Natural killer cell (primary cell): ENCODE measurements at regions of chr6 and their contacts with region 1.

Region 1: DNA sequence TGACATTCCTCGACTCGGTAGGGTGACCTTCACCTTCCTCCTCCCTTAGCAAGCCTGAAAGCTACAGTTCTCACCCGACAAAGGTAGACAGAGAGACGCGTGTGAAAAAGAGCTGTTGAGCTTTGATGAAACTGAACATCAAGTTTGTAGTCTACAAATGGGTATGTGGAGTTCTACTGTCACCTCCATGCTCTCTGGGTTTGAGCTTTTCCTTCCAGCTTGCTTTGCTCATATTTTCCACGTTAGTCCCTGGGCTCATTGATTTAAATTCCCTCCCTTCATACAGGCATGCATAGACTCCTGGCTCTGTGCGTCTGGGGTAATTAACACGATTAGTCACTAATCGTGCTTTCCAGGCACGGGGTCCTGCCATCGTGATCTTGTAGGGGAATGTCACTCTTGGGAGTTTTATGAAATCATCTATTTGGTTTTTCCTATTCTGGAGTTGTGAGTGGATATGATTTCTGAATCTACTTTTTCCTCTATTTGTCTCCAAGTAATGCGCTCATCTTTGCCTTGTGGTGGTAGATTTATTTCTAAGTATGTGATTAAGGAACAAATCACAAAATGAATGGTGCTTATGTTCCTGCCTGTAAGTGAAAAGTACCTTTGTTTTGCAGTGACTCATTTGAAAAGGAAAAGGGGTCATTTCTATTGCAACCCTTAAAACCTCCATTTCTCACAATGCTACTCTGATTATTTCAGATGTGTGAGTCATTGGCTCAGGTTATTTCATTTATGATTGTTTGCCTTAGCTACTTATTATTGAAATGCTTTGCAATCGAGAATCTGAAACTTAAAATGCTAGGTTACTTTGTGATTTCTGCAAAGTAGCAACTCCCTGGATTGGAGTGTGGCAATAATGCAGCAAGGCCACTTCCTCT is 154.6 kb downstream of the ZDHHC14 start:
- DNase-seq: peak in 1 of 2 donors; percentile 60
- ATAC-seq: peak in 1 of 3 donors; percentile 74
- H3K4me3 ChIP-seq: no peak overlapping the region
- H3K4me3 Mint-ChIP-seq: peak overlapping the region; percentile 75
- H3K27ac ChIP-seq: peak overlapping the region; percentile 72
- H3K27ac Mint-ChIP-seq: peak overlapping the region; percentile 91 to 92
- H3K4me1 ChIP-seq: peaks cover 58% of the 10 kb centered on the region
- H3K4me1 Mint-ChIP-seq: peaks cover 64 to 65% of the 10 kb centered on the region in 2 donors
- H3K27me3 ChIP-seq: no peaks in the 10 kb centered on the region
- H3K27me3 Mint-ChIP-seq: no peaks in the 10 kb centered on the region
- CTCF ChIP-seq: no peak

Region 2: GRCh38 chr6:157075549-157076450 is 459.8 kb before region 1 on chr6:
- intact Hi-C with region 1: no loop called
- DNase-seq: no peak
- ATAC-seq: peak; percentile 21 to 32 (median 31)
- H3K4me3 ChIP-seq: no peak overlapping the region
- H3K4me3 Mint-ChIP-seq: no peak overlapping the region
- H3K27ac ChIP-seq: no peak overlapping the region
- H3K27ac Mint-ChIP-seq: peak overlapping the region; percentile 14 to 79
- H3K4me1 ChIP-seq: no peaks in the 10 kb centered on the region
- H3K4me1 Mint-ChIP-seq: peaks cover 35 to 37% of the 10 kb centered on the region in 2 donors
- H3K27me3 ChIP-seq: no peaks in the 10 kb centered on the region
- H3K27me3 Mint-ChIP-seq: no peaks in the 10 kb centered on the region
- CTCF ChIP-seq: no peak

Region 3: DNA sequence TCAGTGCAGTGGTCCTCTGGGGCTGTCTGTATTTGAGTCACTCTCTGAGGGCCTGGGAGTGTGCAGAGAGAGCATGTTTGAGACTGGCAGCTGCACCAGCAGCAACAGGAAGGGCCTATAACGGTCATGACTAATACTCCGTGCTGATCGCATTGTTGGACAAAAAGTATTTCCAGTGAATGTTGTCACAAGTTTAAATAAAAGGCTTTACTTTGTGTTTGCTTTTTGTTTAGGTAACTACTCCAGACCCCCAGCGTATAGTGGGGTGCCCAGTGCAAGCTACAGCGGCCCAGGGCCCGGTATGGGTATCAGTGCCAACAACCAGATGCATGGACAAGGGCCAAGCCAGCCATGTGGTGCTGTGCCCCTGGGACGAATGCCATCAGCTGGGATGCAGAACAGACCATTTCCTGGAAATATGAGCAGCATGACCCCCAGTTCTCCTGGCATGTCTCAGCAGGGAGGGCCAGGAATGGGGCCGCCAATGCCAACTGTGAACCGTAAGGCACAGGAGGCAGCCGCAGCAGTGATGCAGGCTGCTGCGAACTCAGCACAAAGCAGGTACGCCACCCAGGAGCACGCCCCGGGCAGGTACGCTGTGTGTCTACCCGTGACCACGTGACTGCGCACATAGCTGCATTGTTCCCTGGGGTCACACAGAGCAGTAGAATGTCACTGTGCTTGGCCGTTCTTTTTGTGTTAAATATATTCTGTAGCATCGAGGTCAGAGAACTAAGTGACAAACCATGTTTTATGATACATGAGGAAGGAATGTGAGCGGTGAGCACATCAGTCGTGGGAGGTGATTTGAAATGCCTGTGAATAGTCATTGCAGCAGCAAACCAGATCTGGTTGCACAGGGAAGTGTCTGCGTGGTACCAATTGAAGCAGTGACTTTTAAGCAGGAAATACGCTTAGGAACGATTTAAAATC is 386.9 kb before region 1 on chr6:
- intact Hi-C with region 1: loop called (anchors 5 kb)
- DNase-seq: no peak
- ATAC-seq: no peak
- H3K4me3 ChIP-seq: no peak overlapping the region
- H3K4me3 Mint-ChIP-seq: peak overlapping the region; percentile 75
- H3K27ac ChIP-seq: no peak overlapping the region
- H3K27ac Mint-ChIP-seq: peak overlapping the region; percentile 82 to 83
- H3K4me1 ChIP-seq: peaks cover 33% of the 10 kb centered on the region
- H3K4me1 Mint-ChIP-seq: peaks cover 40 to 44% of the 10 kb centered on the region in 2 donors
- H3K27me3 ChIP-seq: no peaks in the 10 kb centered on the region
- H3K27me3 Mint-ChIP-seq: no peaks in the 10 kb centered on the region
- CTCF ChIP-seq: no peak

Region 4: GRCh38 chr6:157235600-157236039 is 300.0 kb before region 1 on chr6:
- intact Hi-C with region 1: no loop called
- DNase-seq: peak; percentile 33 to 79
- ATAC-seq: peak; percentile 64 to 76 (median 74)
- H3K4me3 ChIP-seq: peak overlapping the region; percentile 45
- H3K4me3 Mint-ChIP-seq: peak overlapping the region; percentile 96
- H3K27ac ChIP-seq: no peak overlapping the region
- H3K27ac Mint-ChIP-seq: peak overlapping the region; percentile 43 to 92
- H3K4me1 ChIP-seq: peaks cover 24% of the 10 kb centered on the region
- H3K4me1 Mint-ChIP-seq: peaks cover 19 to 33% of the 10 kb centered on the region in 2 donors
- H3K27me3 ChIP-seq: peaks cover 29% of the 10 kb centered on the region
- H3K27me3 Mint-ChIP-seq: peaks cover 31 to 36% of the 10 kb centered on the region in 2 donors
- CTCF ChIP-seq: peak; percentile 58

Region 5: DNA sequence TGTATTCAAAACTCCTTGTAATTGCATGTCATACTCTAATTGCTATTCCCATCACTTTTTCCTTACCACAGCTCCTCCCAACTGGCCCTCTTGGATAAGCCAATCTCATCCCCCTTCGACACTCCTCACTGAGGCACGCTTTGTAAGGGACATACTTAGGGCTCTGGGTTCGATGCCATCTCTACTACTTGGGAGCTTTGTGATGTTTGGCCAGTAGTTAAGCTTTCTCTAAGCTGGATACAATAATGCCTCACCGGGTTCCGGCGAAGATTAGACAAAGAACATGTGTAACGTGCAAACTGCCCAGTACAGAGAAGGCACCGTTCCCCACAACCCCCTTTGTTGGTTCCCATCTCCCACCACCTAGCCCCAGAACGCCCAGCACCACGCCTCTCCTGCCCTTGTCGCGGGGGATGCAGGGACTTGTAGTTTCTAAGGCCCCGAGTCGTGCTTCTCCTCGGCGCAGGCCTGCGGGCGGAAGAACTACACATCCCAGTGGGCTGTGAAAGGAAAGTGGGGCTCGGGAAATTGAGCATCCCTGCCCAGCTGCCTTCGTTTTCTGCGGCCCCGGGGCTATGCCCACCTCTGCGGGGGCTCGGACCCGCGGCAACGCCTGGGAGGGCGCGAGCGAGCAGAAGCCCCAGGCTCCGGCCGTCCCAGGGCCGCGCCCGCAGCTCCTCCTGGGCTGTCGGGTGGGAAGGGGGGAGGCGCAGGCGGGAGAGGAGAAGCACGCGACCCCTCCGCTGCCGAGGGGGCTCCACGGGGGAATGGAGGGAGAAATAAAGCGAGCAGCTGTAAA is 155.7 kb before region 1 on chr6:
- intact Hi-C with region 1: loop called (anchors 5 kb)
- DNase-seq: peak; percentile 79 to 92
- ATAC-seq: peak; percentile 75 to 84 (median 76)
- H3K4me3 ChIP-seq: peak overlapping the region; percentile 86
- H3K4me3 Mint-ChIP-seq: peak overlapping the region; percentile 87
- H3K27ac ChIP-seq: peak overlapping the region; percentile 73
- H3K27ac Mint-ChIP-seq: peak overlapping the region; percentile 60 to 72
- H3K4me1 ChIP-seq: peaks cover 12% of the 10 kb centered on the region
- H3K4me1 Mint-ChIP-seq: peaks cover 30% of the 10 kb centered on the region in 2 donors
- H3K27me3 ChIP-seq: no peaks in the 10 kb centered on the region
- H3K27me3 Mint-ChIP-seq: no peaks in the 10 kb centered on the region
- CTCF ChIP-seq: no peak

Region 6: GRCh38 chr6:157403684-157404051 is 131.9 kb before region 1 on chr6:
- intact Hi-C with region 1: no loop called
- DNase-seq: no peak
- ATAC-seq: peak in 1 of 3 donors; percentile 82
- H3K4me3 ChIP-seq: no peak overlapping the region
- H3K4me3 Mint-ChIP-seq: no peak overlapping the region
- H3K27ac ChIP-seq: no peak overlapping the region
- H3K27ac Mint-ChIP-seq: no peak overlapping the region
- H3K4me1 ChIP-seq: no peaks in the 10 kb centered on the region
- H3K4me1 Mint-ChIP-seq: peaks cover 4 to 5% of the 10 kb centered on the region in 2 donors
- H3K27me3 ChIP-seq: no peaks in the 10 kb centered on the region
- H3K27me3 Mint-ChIP-seq: no peaks in the 10 kb centered on the region
- CTCF ChIP-seq: no peak

Region 7: GRCh38 chr6:157550114-157550989 is 14.8 kb after region 1 on chr6:
- intact Hi-C with region 1: loop called (anchors 1 kb)
- DNase-seq: peak; percentile 68 to 70
- ATAC-seq: peak; percentile 70 to 85 (median 80)
- H3K4me3 ChIP-seq: no peak overlapping the region
- H3K4me3 Mint-ChIP-seq: peak overlapping the region; percentile 54
- H3K27ac ChIP-seq: peak overlapping the region; percentile 85
- H3K27ac Mint-ChIP-seq: peak overlapping the region; percentile 95
- H3K4me1 ChIP-seq: peaks cover 33% of the 10 kb centered on the region
- H3K4me1 Mint-ChIP-seq: peaks cover 41 to 52% of the 10 kb centered on the region in 2 donors
- H3K27me3 ChIP-seq: no peaks in the 10 kb centered on the region
- H3K27me3 Mint-ChIP-seq: peaks cover 0 to 3% of the 10 kb centered on the region in 2 donors
- CTCF ChIP-seq: no peak

Region 8: GRCh38 chr6:157569543-157569942 is 34.0 kb after region 1 on chr6:
- intact Hi-C with region 1: loop called (anchors 1 kb)
- DNase-seq: peak in 1 of 2 donors; percentile 67
- ATAC-seq: peak in 2 of 3 donors; percentile 68 to 87
- H3K4me3 ChIP-seq: no peak overlapping the region
- H3K4me3 Mint-ChIP-seq: peak overlapping the region; percentile 68
- H3K27ac ChIP-seq: no peak overlapping the region
- H3K27ac Mint-ChIP-seq: peak overlapping the region; percentile 51
- H3K4me1 ChIP-seq: peaks cover 10% of the 10 kb centered on the region
- H3K4me1 Mint-ChIP-seq: peaks cover 14 to 20% of the 10 kb centered on the region in 2 donors
- H3K27me3 ChIP-seq: no peaks in the 10 kb centered on the region
- H3K27me3 Mint-ChIP-seq: no peaks in the 10 kb centered on the region
- CTCF ChIP-seq: no peak